ENCODE measurements at regions of chr2 and their contacts with region 1.

Region 1: DNA sequence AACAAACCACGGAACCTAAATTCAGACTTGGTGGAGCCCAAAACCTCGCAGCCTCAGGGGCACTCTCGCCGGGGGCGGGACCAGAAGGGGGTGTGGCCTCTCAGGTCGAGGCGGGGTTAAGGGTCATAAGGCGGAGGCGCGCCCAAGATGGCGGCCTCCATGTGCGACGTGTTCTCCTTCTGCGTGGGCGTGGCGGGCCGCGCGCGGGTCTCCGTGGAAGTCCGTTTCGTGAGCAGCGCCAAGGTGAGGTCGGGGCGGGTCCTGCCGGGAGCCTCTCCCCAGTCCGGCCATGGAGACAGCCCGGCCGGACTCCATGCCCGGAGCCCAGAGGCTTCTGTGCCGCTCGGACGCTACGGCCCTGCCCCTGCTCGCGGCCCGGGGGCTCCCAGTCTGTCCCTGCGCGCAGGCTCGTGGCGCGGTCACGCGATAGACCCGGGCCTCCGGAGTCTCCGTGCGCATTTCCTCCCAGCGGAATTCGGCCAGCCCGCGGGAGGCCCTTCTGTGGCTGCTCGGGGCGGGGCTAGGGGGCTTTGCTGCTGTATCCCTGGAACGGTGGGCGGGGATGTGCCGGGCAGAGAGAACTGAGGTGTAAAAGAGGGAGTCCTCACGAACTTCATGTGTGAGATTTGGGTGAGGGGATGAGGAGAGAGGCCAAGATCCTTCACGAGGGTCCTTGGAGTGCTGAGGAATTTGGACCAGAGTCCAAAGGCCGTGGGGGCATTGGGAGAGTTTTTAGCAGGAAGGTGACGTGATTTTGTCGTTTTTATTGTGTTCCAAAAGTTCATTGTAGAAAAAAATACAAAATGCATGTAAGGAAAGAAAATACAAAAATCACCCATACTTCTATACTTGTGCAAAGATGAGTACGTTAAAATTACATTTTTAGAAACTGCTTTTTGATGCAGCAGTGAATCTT is at the start of gene SMYD5:
- DNase-seq: peak; percentile 89 to 93
- ATAC-seq: peak; percentile 87 to 96 (median 90)
- H3K4me3 ChIP-seq: peak within 1 kb of the TSS; percentile 100
- H3K27ac ChIP-seq: peak within 1 kb of the TSS; percentile 90
- H3K4me1 ChIP-seq: peaks cover 45% of the 10 kb centered on the region
- H3K27me3 ChIP-seq: no peaks in the 10 kb centered on the region
- CTCF ChIP-seq: no peak
- total RNA-seq, gene SMYD5: 17.1 to 23.0 (median 19.7) TPM

Region 2: DNA sequence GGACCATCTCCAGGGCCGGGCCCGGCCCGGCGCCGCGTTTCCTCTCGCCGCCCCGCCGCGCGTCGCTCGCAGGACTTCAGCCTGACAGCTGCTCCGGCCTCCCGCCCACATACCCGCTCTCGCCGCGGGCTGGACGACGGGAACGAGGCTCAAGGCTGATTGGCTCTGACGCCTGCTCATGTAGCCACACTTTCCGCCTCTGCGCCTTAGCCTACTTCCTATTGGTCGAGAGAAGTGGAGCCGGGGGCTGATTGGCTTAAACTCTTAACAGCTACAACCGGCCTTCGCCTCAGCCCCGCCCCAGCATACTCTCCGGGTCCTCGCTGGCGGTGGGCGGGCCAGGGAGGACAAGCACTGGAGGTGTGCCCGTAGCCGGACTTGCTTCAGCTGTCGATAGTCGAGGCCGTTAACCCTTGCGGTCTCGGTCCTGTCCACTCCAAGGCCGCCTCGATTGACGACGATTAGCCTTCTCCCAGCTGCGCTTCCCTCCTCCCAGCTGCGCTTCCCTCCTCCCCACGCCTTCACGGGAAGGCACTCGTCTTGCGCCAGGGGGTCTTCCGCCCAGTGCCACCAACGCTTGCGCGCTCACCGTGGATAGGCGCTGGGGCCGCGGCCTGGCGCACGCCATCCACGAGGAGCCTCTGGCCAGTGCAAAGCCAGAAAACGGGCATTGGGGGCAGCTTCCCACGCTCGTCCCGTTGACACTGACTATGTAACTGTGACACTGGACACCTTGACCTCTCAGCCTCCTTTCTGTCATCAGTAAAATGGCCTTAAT is 19.0 kb after region 1 on chr2 and contains the start of gene PRADC1:
- intact Hi-C with region 1: loop called in 1 of 2 experiments (anchors 2 kb)
- DNase-seq: peak; percentile 98 to 99
- ATAC-seq: peak; percentile 91 to 95 (median 94)
- H3K4me3 ChIP-seq: peak within 1 kb of the TSS; percentile 91
- H3K27ac ChIP-seq: peak within 1 kb of the TSS; percentile 95
- H3K4me1 ChIP-seq: peaks cover 33% of the 10 kb centered on the region
- H3K27me3 ChIP-seq: no peaks in the 10 kb centered on the region
- CTCF ChIP-seq: no peak
- total RNA-seq, gene PRADC1: 53.6 to 98.3 (median 63.7) TPM

Region 3: DNA sequence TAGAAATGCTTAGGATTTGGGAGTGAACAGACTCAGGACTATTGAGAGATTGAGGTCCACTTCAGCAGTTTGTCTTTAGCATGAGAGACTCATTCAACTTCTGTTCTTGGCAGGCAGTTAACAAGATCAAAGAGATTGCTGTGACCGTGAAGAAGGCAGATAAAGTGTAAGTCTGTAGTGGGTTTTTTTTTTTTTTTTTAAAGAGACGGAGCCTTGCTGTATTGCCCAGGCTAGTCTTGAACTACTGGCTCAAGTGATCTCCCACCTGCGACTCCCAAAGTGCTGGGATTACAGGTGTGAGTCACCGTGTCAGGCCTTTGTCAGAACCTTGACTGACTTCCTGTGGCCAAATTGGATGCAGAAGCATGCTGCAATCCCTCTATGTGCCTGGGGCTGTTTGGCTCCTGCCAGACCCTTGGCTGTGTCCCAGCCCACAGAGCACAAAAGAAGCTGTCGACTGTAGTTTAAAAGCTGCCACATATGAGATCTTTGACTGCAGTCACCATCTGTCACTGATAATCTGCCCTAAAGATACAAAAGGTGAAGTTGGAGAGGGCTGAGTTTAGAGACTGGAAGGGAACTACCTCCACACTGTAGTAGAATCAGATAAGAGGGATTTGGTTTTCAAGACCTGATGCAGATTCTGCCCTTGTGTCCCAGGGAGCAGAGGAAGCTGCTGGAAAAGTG is 29.6 kb after region 1 on chr2:
- intact Hi-C with region 1: no loop called
- DNase-seq: no peak
- ATAC-seq: peak; percentile 24 to 80 (median 64)
- H3K4me3 ChIP-seq: no peak overlapping the region
- H3K27ac ChIP-seq: no peak overlapping the region
- H3K4me1 ChIP-seq: peaks cover 11% of the 10 kb centered on the region
- H3K27me3 ChIP-seq: no peaks in the 10 kb centered on the region
- CTCF ChIP-seq: no peak

Measured in psoas muscle (tissue), 8 donors.